HCT116 (cell line): ENCODE measurements at regions of chr9 and their contacts with region 1.

Region 1: GRCh38 chr9:129413537-129414376 is 207.1 kb downstream of the C9orf50 start:
- DNase-seq: peak; percentile 81
- ATAC-seq: peak; percentile 85
- H3K4me3 ChIP-seq: peak overlapping the region; percentile 56 to 63
- H3K27ac ChIP-seq: peak overlapping the region; percentile 91
- H3K4me1 ChIP-seq: peaks cover 40 to 69% of the 10 kb centered on the region in 2 experiments
- H3K27me3 ChIP-seq: no peaks in the 10 kb centered on the region
- CTCF ChIP-seq: no peak
- POLR2A ChIP-seq: peak; percentile 17
- RAD21 ChIP-seq: no peak

Region 2: DNA sequence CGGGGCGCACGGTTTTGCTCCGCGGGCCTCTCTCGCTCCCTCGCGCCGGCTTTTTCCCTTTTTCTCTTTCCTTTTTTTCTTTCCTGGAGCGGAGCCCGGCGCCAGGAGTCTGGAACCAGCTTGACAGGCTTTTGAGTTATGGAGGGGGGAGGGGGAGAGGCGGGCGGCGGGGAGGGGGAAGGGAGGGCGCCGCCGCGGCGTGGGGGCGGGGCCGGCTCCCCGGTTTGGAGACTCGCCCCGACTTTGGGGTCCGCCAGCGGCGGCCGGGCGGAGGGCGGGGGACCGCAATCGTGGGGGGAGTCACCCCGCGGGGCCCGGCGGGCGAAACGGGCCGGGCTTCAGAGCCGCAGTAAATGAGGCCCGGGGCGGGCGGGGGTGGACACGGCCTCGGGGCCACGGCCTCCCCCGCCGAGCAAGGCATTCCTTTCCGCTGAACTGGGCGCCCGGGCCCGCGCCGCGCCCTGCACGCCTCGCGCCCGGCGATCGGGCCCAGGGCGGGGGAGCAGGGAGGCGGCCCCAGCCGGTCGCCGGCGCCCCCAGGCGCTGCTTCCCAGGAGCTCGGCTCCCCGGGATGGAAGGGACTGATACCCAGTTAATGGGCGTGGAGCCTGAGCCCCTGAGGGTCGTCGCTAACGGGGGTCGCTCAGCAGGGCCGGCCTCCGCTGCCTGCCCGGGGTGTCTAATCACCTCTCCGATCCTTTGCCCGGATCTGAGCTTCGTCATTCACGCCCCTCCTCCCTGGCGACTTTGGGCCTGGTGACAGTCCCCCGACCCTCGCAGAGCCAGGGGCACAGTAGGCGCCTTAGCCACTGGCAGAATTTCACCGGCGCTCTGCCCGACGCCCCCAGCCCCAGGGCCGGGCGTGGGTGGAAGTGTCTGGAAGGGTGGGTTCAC is 69.0 kb after region 1 on chr9:
- CTCF ChIA-PET with region 1: no interaction called
- POLR2A ChIA-PET with region 1: interaction called, 4 read pairs
- RAD21 ChIA-PET with region 1: interaction called in 1 of 2 experiments, 3 read pairs
- intact Hi-C with region 1: loop called (anchors 2 kb)
- DNase-seq: no peak
- ATAC-seq: peak; percentile 69
- H3K4me3 ChIP-seq: peak overlapping the region; percentile 44 to 56
- H3K27ac ChIP-seq: peak overlapping the region; percentile 100
- H3K4me1 ChIP-seq: peaks cover 92 to 99% of the 10 kb centered on the region in 2 experiments
- H3K27me3 ChIP-seq: no peaks in the 10 kb centered on the region
- CTCF ChIP-seq: no peak
- POLR2A ChIP-seq: no peak
- RAD21 ChIP-seq: no peak

Region 3: GRCh38 chr9:130138171-130138653 is 724.5 kb after region 1 on chr9:
- CTCF ChIA-PET with region 1: no interaction called
- POLR2A ChIA-PET with region 1: no interaction called
- RAD21 ChIA-PET with region 1: no interaction called
- intact Hi-C with region 1: no loop called
- DNase-seq: no peak
- ATAC-seq: peak; percentile 43; the same call in 1 of the 2 replicates
- H3K4me3 ChIP-seq: no peak overlapping the region
- H3K27ac ChIP-seq: no peak overlapping the region
- H3K4me1 ChIP-seq: peaks cover 0 to 17% of the 10 kb centered on the region in 2 experiments; a peak in 2 of 4 replicates
- H3K27me3 ChIP-seq: peaks cover 4% of the 10 kb centered on the region; the same call in 1 of the 2 replicates
- CTCF ChIP-seq: no peak
- POLR2A ChIP-seq: no peak
- RAD21 ChIP-seq: no peak